Sciatic nerve (tissue), 2 donors: ENCODE measurements at regions of chr12 and their contacts with region 1.

Region 1: DNA sequence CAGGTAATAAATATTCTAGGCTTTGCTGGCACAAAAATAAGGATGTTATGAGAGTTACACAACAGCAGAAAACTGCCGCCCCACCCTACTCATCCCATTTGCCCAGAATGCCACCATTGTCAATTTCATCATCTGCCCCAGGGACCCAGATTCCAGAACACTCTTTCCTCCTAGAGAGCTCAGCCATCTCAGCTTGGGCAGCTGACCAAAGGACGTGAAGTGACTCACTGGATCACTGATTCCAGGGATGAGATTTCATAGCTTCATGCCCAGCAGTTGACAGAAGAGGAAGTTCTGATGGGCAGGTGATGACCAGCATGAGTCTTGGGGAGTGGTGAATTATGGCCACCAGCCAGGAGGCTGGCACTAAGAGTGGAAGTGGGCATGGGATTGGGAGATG is 450.3 kb downstream of the RMST start:
- DNase-seq: no peak
- ATAC-seq: peak; percentile 69

Region 2: GRCh38 chr12:97936165-97936564 is 23.2 kb after region 1 on chr12:
- intact Hi-C with region 1: loop called (anchors 1 kb)
- DNase-seq: no peak
- ATAC-seq: no peak

Region 3: GRCh38 chr12:98073593-98073992 is 160.7 kb after region 1 on chr12:
- intact Hi-C with region 1: no loop called
- DNase-seq: no peak
- ATAC-seq: no peak